Activated CD4-positive, alpha-beta T cell treated with anti-CD3 and anti-CD28 coated beads, Interleukin-2, amount 10 ng/mL, durations not matched to agents 7 days and 5 days (primary cell): ENCODE measurements at regions of chr6 and their contacts with region 1.

Region 1: GRCh38 chr6:159008656-159009288 is 8.8 kb upstream of the RSPH3 start:
- DNase-seq: no peak
- H3K4me3 Mint-ChIP-seq: peak overlapping the region; percentile 26
- H3K27ac Mint-ChIP-seq: peak overlapping the region; percentile 81
- H3K4me1 Mint-ChIP-seq: peaks cover 30% of the 10 kb centered on the region
- H3K27me3 Mint-ChIP-seq: no peaks in the 10 kb centered on the region

Region 2: GRCh38 chr6:159042003-159042825 is 33.4 kb after region 1 on chr6:
- CTCF ChIA-PET with region 1: interaction called, 15 read pairs
- POLR2A ChIA-PET with region 1: interaction called, 3 read pairs
- DNase-seq: peak; percentile 86
- H3K4me3 Mint-ChIP-seq: peak overlapping the region; percentile 97
- H3K27ac Mint-ChIP-seq: peak overlapping the region; percentile 97
- H3K4me1 Mint-ChIP-seq: peaks cover 61% of the 10 kb centered on the region
- H3K27me3 Mint-ChIP-seq: no peaks in the 10 kb centered on the region

Region 3: DNA sequence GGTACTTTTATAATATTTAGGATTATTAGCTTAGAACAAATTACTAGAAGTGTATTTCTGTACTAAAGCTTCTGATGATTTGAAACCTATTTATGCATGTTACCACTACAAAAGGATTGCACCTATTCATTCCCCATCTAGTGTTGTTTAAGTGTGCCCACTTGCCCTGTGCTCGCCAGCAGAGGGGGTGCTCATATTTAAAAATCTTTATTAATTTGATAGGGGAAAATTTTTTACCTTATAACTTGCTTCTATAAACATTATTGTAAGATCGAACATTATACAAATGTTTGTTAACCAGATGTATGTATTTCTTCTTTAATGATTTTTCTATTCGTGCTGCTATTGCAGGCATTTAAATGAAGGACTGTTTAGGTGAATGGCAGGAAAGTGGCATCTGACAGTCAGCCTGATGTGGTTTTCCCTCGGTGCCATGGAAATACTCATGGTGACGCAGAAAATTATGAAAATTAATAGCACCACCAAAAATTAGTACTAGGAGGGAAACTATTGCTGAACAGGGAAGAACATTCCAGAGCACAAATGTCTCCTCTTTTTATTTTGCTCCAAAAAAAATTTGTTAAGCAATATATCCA is 116.3 kb after region 1 on chr6:
- CTCF ChIA-PET with region 1: interaction called, 11 read pairs
- POLR2A ChIA-PET with region 1: no interaction called
- DNase-seq: no peak
- H3K4me3 Mint-ChIP-seq: no peak overlapping the region
- H3K27ac Mint-ChIP-seq: no peak overlapping the region
- H3K4me1 Mint-ChIP-seq: no peaks in the 10 kb centered on the region
- H3K27me3 Mint-ChIP-seq: peaks cover 9% of the 10 kb centered on the region

Region 4: GRCh38 chr6:159134701-159135364 is 126.1 kb after region 1 on chr6:
- CTCF ChIA-PET with region 1: interaction called, 33 read pairs
- POLR2A ChIA-PET with region 1: no interaction called
- DNase-seq: peak; percentile 80
- H3K4me3 Mint-ChIP-seq: no peak overlapping the region
- H3K27ac Mint-ChIP-seq: no peak overlapping the region
- H3K4me1 Mint-ChIP-seq: peaks cover 11% of the 10 kb centered on the region
- H3K27me3 Mint-ChIP-seq: peaks cover 29% of the 10 kb centered on the region